ENCODE measurements at regions of chr2 and their contacts with region 1.

Region 1: GRCh38 chr2:68251187-68251854 is 1.0 kb downstream of the PPP3R1 start:
- DNase-seq: peak; percentile 81 to 93 (median 86)
- H3K4me3 ChIP-seq: peak overlapping the region; percentile 66 to 83
- H3K4me3 Mint-ChIP-seq: peak overlapping the region in 7 of 8 donors; percentile 87 to 100 (median 94)
- H3K27ac ChIP-seq: peak overlapping the region; percentile 91
- H3K27ac Mint-ChIP-seq: peak overlapping the region in 6 of 7 donors; percentile 91 to 99 (median 97)
- H3K4me1 ChIP-seq: peaks cover 70% of the 10 kb centered on the region
- H3K4me1 Mint-ChIP-seq: peaks cover 20 to 59% (median 34%) of the 10 kb centered on the region in 4 donors
- H3K27me3 ChIP-seq: no peaks in the 10 kb centered on the region
- H3K27me3 Mint-ChIP-seq: peaks cover 0 to 4% of the 10 kb centered on the region in 2 donors

Region 2: GRCh38 chr2:68062680-68063387 is 188.5 kb before region 1 on chr2 and contains the start of gene C1D:
- CTCF ChIA-PET with region 1: no interaction called
- POLR2A ChIA-PET with region 1: no interaction called
- intact Hi-C with region 1: loop called (anchors 2 kb)
- DNase-seq: peak; percentile 89 to 92 (median 90)
- H3K4me3 ChIP-seq: peak within 1 kb of the TSS; percentile 93 to 100
- H3K4me3 Mint-ChIP-seq: peak within 1 kb of the TSS; percentile 95 to 98 (median 96)
- H3K27ac ChIP-seq: peak within 1 kb of the TSS; percentile 98
- H3K27ac Mint-ChIP-seq: peak within 1 kb of the TSS; percentile 89 to 99 (median 98)
- H3K4me1 ChIP-seq: peaks cover 44% of the 10 kb centered on the region
- H3K4me1 Mint-ChIP-seq: peaks cover 32 to 52% (median 38%) of the 10 kb centered on the region in 4 donors
- H3K27me3 ChIP-seq: no peaks in the 10 kb centered on the region
- H3K27me3 Mint-ChIP-seq: peaks cover 6 to 9% of the 10 kb centered on the region in 2 donors
- total RNA-seq, gene C1D: 12.4 to 13.4 TPM

Region 3: DNA sequence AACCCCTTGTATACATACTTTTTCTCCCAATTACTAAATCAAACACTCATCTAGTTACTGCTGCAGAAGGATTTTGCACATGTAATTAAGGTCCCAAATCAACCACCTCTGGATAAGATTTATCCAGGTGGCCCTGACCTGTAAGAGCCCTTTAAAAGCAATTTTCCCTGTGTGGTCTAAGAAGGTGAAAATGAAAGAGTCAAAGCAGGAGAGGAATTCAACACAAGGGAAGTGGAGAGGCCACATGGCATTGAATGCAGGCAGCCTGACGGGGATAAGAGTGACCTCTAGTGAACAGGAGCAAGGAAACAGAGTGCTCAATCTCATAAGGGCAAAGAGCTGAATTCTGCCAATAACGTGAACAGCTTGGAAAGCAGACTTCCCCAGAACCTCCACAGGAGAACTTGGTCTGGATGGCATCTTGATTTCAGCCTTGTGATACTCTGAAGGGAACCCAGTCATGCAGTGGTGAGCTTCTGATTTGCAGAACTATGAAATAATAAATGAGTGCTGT is 26.1 kb before region 1 on chr2:
- CTCF ChIA-PET with region 1: interaction called, 6 read pairs
- POLR2A ChIA-PET with region 1: interaction called, 4 read pairs
- intact Hi-C with region 1: loop called (anchors 1 kb)
- DNase-seq: peak in 4 of 5 donors; percentile 11 to 26 (median 18)
- H3K4me3 ChIP-seq: no peak overlapping the region
- H3K4me3 Mint-ChIP-seq: peak overlapping the region in 6 of 8 donors; percentile 0 to 82 (median 38)
- H3K27ac ChIP-seq: no peak overlapping the region
- H3K27ac Mint-ChIP-seq: peak overlapping the region; percentile 3 to 91 (median 19)
- H3K4me1 ChIP-seq: peaks cover 94% of the 10 kb centered on the region
- H3K4me1 Mint-ChIP-seq: peaks cover 71 to 99% (median 83%) of the 10 kb centered on the region in 4 donors
- H3K27me3 ChIP-seq: no peaks in the 10 kb centered on the region
- H3K27me3 Mint-ChIP-seq: no peaks in the 10 kb centered on the region

Region 4: DNA sequence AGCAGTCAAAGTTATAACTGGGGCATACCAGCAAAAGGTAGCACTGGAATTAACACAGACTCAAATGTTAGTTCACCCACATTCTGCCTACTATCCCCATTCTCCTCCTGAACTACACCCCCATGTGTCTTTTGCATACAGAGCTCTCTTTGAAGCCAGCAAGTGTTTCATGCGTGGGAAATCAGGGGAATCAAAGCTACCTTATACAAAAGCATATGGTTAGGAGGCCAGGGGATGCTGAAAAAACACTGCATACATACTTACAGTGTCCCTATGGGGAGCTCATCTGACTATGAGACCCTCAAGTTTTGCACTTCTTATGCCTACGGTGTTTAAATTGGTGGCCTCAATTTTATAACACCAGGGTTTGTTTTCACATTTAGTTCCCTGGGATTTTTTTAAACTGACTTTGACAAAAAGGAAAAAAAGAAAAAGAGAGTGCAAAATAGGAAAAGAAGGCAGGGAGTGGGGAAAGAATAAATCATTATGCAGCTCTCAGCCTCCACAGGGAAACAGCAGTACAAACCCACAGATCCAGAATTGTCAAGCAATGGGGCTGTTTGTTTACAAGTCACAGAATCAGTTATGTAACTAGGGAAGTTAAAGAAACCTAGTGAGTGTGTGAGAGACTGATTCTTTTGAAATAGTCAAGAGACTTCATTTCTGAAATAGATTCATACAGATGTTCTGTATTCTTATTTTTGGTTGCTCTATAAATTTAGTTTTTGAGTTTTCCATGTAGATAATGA is 21.1 kb after region 1 on chr2:
- CTCF ChIA-PET with region 1: no interaction called
- POLR2A ChIA-PET with region 1: interaction called, 3 read pairs
- intact Hi-C with region 1: loop called (anchors 2 kb)
- DNase-seq: no peak
- H3K4me3 ChIP-seq: no peak overlapping the region
- H3K4me3 Mint-ChIP-seq: no peak overlapping the region
- H3K27ac ChIP-seq: no peak overlapping the region
- H3K27ac Mint-ChIP-seq: no peak overlapping the region
- H3K4me1 ChIP-seq: no peaks in the 10 kb centered on the region
- H3K4me1 Mint-ChIP-seq: no peaks in the 10 kb centered on the region
- H3K27me3 ChIP-seq: peaks cover 5% of the 10 kb centered on the region
- H3K27me3 Mint-ChIP-seq: peaks cover 7 to 8% of the 10 kb centered on the region in 2 donors